ENCODE measurements at regions of chr9 and their contacts with region 1.

Region 1: DNA sequence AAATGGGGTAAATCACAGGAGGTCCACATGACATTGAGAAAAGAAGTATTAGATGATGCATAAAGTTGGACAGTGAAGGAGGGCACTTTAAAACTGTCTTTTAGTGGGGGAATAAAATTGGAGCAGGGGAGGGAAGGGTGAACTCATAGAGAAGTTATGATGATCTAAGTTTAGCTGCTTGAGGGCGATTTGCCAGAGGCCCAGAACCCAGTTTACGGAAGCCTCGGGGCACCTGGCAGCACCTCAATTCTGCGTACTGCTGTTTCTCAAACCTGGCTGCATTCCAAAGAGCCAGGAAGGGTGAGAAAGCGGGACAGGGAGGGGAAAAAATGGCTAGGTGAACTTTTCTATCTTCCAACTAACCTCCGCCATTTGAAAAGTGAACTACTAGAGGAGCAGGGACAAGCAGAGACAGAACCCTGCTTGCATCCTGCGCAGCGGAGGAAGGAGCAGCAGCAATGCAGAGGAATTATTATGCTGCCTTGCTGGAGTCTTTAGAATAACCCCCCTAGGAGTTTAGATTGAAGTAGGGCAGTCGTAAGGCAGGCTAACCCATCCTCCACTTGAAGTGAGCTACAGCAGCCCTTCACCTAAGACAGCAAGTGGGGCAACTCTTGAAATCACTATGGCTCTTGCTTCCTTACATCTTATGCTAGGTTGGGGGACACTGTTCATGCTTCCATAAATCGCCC is 316.8 kb downstream of the BRINP1 start:
- DNase-seq: peak; percentile 61 to 84 (median 67)
- ATAC-seq: peak in 3 of 4 donors; percentile 81 to 89 (median 84)
- H3K4me3 ChIP-seq: peak overlapping the region in 8 of 12 donors; percentile 13 to 36 (median 20)
- H3K27ac ChIP-seq: peak overlapping the region; percentile 36 to 88 (median 74)
- H3K4me1 ChIP-seq: peaks cover 0 to 18% (median 0%) of the 10 kb centered on the region in 12 donors
- H3K27me3 ChIP-seq: no peaks in the 10 kb centered on the region
- CTCF ChIP-seq: no peak
- POLR2A ChIP-seq: no peak

Region 2: GRCh38 chr9:118975736-118976135 is 76.7 kb before region 1 on chr9:
- intact Hi-C with region 1: loop called in 1 of 10 experiments (anchors 2 kb)
- DNase-seq: no peak
- ATAC-seq: no peak
- H3K4me3 ChIP-seq: no peak overlapping the region
- H3K27ac ChIP-seq: no peak overlapping the region
- H3K4me1 ChIP-seq: no peaks in the 10 kb centered on the region
- H3K27me3 ChIP-seq: no peaks in the 10 kb centered on the region
- CTCF ChIP-seq: no peak
- POLR2A ChIP-seq: no peak

Region 3: DNA sequence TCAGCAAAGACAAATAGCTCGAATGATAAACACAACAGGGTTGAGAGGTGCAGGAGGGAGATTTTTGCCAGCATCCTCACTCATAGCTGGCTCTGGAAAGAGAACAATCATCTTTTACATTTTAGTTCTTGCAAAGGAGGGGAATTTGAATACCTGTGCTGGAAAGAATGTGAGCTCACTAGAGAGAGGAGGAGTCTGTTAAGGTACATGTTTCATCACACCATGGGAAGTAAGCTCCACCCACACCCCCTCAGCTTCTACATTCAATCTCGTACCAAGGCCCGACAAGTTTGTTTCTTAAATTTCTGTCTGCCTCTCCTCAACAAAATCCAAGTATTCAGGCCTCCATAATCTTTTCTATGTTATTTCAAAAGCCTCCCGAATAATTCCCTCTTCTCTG is 62.2 kb after region 1 on chr9:
- intact Hi-C with region 1: loop called in 1 of 10 experiments (anchors 10 kb)
- DNase-seq: no peak
- ATAC-seq: no peak
- H3K4me3 ChIP-seq: no peak overlapping the region
- H3K27ac ChIP-seq: no peak overlapping the region
- H3K4me1 ChIP-seq: no peaks in the 10 kb centered on the region
- H3K27me3 ChIP-seq: no peaks in the 10 kb centered on the region
- CTCF ChIP-seq: no peak
- POLR2A ChIP-seq: no peak

Measured in heart left ventricle (tissue), 16 donors.